ENCODE measurements at regions of chr7 and their contacts with region 1.

Region 1: DNA sequence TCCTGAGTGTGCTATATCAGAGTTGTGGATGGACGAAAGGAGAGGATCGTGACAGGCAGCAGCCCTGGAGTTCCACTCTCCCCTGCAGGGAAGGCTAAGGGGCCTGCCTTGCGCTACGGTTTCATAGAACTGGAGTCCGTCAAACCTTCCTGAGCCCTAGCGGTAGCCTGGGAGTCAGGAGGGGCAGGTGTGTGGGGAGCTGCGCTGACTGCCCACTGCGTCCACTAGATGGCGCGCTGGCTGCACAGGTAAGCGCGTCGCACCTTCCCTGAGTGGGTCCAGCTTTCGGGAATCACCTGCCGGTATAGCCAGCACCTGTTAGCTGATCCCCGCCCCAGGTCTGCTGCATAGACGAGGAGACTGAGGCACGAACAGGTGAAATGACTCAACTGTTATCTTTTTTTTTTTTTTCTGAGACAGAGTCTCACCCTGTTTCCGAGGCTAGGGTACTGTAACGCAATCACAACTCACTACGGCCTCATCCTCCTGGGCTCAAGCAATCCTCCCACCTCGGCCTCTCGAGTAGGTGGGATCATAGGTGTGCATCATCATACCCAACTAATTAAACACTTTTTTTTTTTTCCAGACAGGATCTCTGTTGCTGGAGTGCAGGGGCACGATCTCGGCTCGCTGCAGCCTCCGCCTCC is 20.2 kb upstream of the BAIAP2L1 start:
- DNase-seq: peak; percentile 93
- H3K27ac ChIP-seq: no peak overlapping the region
- CTCF ChIP-seq: peak; percentile 100

Region 2: GRCh38 chr7:98400542-98401340 is 20.3 kb before region 1 on chr7 and contains the start of gene BAIAP2L1:
- CTCF ChIA-PET with region 1: interaction called, 26 read pairs
- POLR2A ChIA-PET with region 1: no interaction called
- DNase-seq: peak; percentile 97
- H3K27ac ChIP-seq: peak within 1 kb of the TSS; percentile 96
- CTCF ChIP-seq: no peak

Region 3: DNA sequence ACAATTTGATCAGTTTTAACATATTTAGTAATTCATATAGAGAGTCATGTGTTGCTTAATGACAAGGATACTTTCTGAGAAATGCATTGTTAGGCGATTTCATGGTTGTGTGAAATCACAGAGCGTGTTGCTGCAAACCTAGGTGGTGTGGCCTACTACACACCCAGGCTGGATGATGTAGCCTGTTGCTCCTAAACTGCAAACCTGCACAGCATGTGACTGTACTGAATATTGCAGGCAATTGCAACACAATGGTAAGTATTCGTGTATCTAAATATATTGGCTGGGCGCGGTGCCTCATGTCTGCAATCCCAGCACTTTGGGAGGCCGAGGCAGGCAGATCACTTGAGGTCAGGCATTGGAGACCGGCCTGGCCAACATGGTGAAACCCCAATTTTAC is 53.5 kb after region 1 on chr7:
- CTCF ChIA-PET with region 1: interaction called, 18 read pairs
- POLR2A ChIA-PET with region 1: no interaction called
- DNase-seq: no peak
- H3K27ac ChIP-seq: peak overlapping the region; percentile 73
- CTCF ChIP-seq: no peak

Region 4: DNA sequence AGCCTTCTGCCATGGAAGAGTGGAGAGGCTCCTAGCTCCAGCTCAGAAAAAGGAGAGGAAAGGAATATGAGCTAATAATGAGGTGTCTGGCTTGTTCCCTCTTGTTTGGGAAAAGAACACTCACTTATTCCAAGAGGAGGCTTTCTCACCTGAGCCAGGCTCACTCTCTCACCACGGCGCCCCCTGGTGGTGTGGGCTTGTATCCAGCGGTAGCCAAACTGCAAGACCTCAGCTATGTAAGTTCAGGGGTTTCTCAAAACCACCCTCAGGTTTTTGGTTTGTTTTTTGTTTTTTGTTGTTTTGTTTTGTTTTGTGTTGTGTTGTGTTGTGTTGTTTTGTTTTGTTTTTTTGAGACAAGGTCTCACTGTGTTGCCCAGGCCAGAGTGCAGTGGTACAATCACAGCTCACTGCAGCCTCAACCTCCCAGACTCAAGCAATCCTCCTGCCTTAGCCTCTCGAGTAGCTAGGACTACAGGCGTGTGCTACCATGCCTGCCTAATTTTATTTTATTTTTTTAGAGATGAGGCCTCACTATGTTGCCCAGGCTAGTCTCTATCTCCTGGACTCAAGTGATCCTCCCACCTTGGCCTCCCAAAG is 324.7 kb after region 1 on chr7:
- CTCF ChIA-PET with region 1: interaction called, 11 read pairs
- POLR2A ChIA-PET with region 1: no interaction called
- DNase-seq: peak; percentile 80
- H3K27ac ChIP-seq: no peak overlapping the region
- CTCF ChIP-seq: peak; percentile 95

Region 5: GRCh38 chr7:98841179-98841997 is 420.3 kb after region 1 on chr7:
- CTCF ChIA-PET with region 1: interaction called, 30 read pairs
- POLR2A ChIA-PET with region 1: interaction called, 3 read pairs
- DNase-seq: peak; percentile 65
- H3K27ac ChIP-seq: no peak overlapping the region
- CTCF ChIP-seq: peak; percentile 98

Region 6: DNA sequence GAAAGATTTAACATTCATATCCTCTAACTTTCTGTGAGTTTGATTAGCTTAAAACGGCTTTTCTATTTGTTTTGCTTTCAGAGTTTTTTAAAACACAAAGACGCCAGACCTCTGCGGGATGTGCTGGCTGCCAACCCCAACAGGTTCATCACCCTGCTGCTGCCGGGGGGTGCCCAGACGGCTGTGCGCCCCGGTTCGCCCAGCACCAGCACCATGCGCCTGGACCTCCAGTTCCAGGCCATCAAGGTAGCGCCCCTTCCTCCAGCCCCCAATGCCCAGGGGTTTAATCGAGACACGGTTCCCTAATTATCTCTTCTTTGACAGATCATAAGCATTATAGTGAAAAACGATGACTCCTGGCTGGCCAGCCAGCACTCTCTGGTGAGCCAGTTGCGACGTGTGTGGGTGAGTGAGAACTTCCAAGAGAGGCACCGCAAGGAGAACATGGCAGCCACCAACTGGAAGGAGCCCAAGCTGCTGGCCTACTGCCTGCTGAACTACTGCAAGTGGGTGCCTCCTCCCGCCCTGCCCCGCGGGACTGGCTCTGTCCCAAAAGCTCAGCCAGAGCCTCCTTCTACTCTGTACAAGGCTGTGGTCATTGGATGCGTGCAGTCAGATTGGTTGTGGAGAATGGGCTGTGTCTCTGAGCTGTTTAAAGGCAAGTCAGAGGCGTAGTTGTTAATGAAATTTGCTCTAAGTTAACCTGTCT is 528.4 kb after region 1 on chr7:
- CTCF ChIA-PET with region 1: no interaction called
- POLR2A ChIA-PET with region 1: no interaction called
- DNase-seq: no peak
- H3K27ac ChIP-seq: no peak overlapping the region
- CTCF ChIP-seq: no peak

Measured in RWPE1 (cell line).